Endothelial cell of umbilical vein (primary cell): ENCODE measurements at regions of chr9 and their contacts with region 1.

Region 1: DNA sequence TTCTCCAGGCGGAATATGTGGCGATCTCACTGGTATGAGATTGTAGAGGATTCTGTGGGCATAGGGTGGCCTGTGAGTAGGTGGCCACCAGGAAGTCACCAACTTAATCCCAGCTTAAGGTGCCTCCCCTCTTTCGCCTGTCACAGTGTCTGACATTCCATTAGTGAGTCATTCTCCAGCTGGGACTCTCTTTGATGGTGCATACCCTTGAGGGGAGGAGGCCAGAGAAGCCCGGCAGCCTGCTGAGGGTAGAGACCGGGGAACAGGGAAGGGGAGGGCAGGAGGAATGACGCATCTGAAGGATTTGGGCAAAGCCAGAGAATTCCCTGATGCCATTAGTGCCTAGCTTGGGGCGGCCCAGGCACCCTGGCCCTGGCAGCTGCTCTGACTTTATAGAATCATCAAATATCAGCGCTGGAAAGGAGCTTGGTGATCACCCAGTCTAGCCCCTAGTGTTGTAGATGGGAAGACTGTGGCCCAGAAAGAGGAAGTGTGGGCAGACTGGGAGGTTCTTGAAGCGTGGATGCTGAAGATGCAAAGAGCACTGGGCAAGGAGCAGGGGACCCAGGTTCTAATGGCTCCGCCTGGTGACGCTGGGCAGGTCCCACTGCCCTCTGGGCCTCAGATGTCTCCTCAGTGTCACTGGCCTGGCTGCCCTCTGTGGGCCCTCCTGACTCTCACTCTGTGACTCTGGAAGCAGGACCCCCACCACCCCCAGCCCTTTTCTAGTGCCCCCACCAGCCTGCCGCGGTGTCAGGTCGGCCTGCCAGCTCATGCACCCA is 41.4 kb downstream of the DAB2IP start:
- DNase-seq: no peak
- H3K4me3 ChIP-seq: no peak overlapping the region
- H3K27ac ChIP-seq: no peak overlapping the region
- H3K4me1 ChIP-seq: no peaks in the 10 kb centered on the region
- H3K27me3 ChIP-seq: no peaks in the 10 kb centered on the region
- CTCF ChIP-seq: no peak
- POLR2A ChIP-seq: no peak

Region 2: GRCh38 chr9:121674952-121675351 is 17.8 kb before region 1 on chr9:
- CTCF ChIA-PET with region 1: no interaction called
- POLR2A ChIA-PET with region 1: no interaction called
- dilution Hi-C with region 1: no loop called
- intact Hi-C with region 1: loop called (anchors 1 kb)
- DNase-seq: no peak
- H3K4me3 ChIP-seq: no peak overlapping the region
- H3K27ac ChIP-seq: no peak overlapping the region
- H3K4me1 ChIP-seq: no peaks in the 10 kb centered on the region
- H3K27me3 ChIP-seq: no peaks in the 10 kb centered on the region
- CTCF ChIP-seq: no peak
- POLR2A ChIP-seq: no peak